Caco-2 (cell line): ENCODE measurements at regions of chr11 and their contacts with region 1.

Region 1: GRCh38 chr11:128587452-128587851 is at the start of gene ETS1:
- DNase-seq: no peak
- H3K4me3 ChIP-seq: no peak within 1 kb of the TSS
- H3K4me3 Mint-ChIP-seq: no peak within 1 kb of the TSS
- H3K27ac Mint-ChIP-seq: no peak within 1 kb of the TSS
- H3K4me1 ChIP-seq: no peaks in the 10 kb centered on the region
- H3K4me1 Mint-ChIP-seq: no peaks in the 10 kb centered on the region
- H3K27me3 ChIP-seq: peaks cover 4% of the 10 kb centered on the region; the same call in 1 of the 2 replicates
- H3K27me3 Mint-ChIP-seq: peaks cover 57% of the 10 kb centered on the region
- CTCF ChIP-seq: no peak
- total RNA-seq, gene ETS1: 1.1 and 1.2 TPM in 2 replicates

Region 2: DNA sequence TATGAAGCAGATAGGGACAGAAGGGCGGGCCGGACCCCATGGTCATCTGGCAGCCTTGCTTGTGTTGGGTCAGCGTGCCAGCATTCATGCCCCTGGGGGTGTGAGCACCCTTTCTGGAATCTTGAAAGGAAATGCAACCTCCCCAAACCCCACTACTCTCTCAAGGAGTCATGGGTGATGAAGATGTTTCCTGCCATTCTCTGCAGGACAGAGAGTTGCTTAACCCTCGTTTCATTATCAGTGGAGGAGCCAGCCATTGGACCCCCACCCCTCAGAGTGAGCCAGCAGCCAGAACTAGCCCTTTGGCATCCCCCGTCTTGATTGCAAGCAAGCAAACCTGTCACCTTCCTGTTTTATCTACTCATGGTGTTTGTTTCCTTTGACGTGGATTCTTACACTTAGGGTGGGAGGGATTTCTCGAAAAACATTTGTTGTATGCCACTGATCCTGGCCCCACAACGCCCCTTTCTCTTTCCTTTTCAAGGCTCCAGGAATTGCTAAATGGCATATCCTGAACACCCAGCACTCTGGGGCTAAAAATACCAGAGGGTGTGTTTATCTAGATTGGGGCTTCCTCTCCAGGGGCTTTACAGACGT is 258.4 kb before region 1 on chr11:
- CTCF ChIA-PET with region 1: no interaction called
- POLR2A ChIA-PET with region 1: no interaction called
- intact Hi-C with region 1: no loop called
- DNase-seq: no peak
- H3K4me3 ChIP-seq: no peak overlapping the region
- H3K4me3 Mint-ChIP-seq: no peak overlapping the region
- H3K27ac Mint-ChIP-seq: no peak overlapping the region
- H3K4me1 ChIP-seq: no peaks in the 10 kb centered on the region
- H3K4me1 Mint-ChIP-seq: no peaks in the 10 kb centered on the region
- H3K27me3 ChIP-seq: no peaks in the 10 kb centered on the region
- H3K27me3 Mint-ChIP-seq: peaks cover 20% of the 10 kb centered on the region
- CTCF ChIP-seq: no peak

Region 3: GRCh38 chr11:128814856-128815705 is 227.6 kb after region 1 on chr11:
- CTCF ChIA-PET with region 1: no interaction called
- POLR2A ChIA-PET with region 1: no interaction called
- intact Hi-C with region 1: loop called (anchors 1 kb)
- DNase-seq: peak; percentile 86 to 89
- H3K4me3 ChIP-seq: no peak overlapping the region
- H3K4me3 Mint-ChIP-seq: peak overlapping the region; percentile 16
- H3K27ac Mint-ChIP-seq: no peak overlapping the region
- H3K4me1 ChIP-seq: no peaks in the 10 kb centered on the region
- H3K4me1 Mint-ChIP-seq: peaks cover 7% of the 10 kb centered on the region
- H3K27me3 ChIP-seq: no peaks in the 10 kb centered on the region
- H3K27me3 Mint-ChIP-seq: peaks cover 16% of the 10 kb centered on the region
- CTCF ChIP-seq: no peak

Region 4: DNA sequence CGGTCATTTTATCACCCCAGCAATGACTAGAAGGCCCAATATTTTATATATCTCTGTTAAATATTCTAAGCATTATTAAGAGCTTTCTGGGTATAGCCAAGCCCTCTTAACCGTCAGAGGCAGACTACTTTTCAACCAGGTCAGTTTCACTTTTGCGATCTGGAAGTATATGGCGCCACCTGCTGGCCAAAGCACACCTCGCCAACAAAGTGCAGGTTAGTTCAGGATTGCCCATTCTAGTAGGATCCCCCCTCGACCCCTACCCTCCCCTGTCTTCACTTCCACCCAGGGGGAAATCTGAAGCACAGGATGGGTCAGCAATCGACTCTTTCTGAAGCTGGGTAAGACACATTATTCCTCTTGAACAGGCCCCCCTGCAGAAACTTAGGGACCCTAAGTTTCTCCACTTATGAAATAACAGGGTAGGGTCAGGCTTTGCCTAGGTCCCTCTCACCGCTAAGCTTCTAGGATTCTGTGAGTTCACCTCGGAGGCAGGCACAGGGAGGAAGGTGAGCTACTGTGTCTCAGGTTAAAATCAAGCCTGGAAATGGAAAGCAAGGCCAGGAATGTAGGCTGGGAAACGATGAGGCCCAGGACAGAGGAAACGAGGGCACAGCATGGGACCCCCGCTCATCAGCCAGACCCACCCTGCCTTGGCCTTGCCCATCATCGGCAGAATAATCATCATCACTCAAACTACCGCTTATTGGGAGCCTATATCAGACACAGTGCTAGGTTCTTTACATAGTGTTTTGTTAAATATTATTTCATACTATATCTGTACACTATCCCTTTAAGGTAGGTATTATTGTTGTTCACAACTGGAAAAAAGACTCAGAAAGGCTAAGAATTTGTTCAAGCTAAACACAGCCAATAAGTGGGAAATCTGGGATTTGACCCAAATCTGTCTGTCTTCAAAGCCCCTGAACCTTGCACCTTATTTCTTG is 244.0 kb after region 1 on chr11:
- CTCF ChIA-PET with region 1: no interaction called
- POLR2A ChIA-PET with region 1: no interaction called
- intact Hi-C with region 1: no loop called
- DNase-seq: peak; percentile 82 to 88
- H3K4me3 ChIP-seq: no peak overlapping the region
- H3K4me3 Mint-ChIP-seq: no peak overlapping the region
- H3K27ac Mint-ChIP-seq: no peak overlapping the region
- H3K4me1 ChIP-seq: peaks cover 12% of the 10 kb centered on the region
- H3K4me1 Mint-ChIP-seq: peaks cover 8% of the 10 kb centered on the region
- H3K27me3 ChIP-seq: no peaks in the 10 kb centered on the region
- H3K27me3 Mint-ChIP-seq: peaks cover 8% of the 10 kb centered on the region
- CTCF ChIP-seq: peak; percentile 97 to 98

Region 5: DNA sequence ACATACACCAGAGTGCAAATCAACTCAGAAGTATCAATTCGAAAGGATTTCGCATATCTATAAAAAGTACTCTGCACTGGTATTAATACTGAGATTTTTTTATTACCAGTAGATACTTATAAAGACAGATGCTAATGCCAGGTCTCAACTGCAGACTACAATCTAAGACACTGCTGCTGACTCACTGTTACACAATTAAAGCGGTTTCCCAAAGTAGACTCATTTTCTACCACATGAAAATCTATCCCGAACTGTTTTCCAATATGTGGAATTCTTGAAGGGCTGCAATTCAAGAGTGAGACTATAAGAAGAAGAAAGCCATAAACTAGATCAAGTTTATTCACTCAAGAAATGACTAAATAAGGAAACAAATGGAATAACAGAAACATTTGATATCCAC is 661.9 kb after region 1 on chr11:
- CTCF ChIA-PET with region 1: no interaction called
- POLR2A ChIA-PET with region 1: no interaction called
- intact Hi-C with region 1: no loop called
- DNase-seq: no peak
- H3K4me3 ChIP-seq: no peak overlapping the region
- H3K4me3 Mint-ChIP-seq: no peak overlapping the region
- H3K27ac Mint-ChIP-seq: no peak overlapping the region
- H3K4me1 ChIP-seq: peaks cover 14% of the 10 kb centered on the region
- H3K4me1 Mint-ChIP-seq: peaks cover 23% of the 10 kb centered on the region
- H3K27me3 ChIP-seq: no peaks in the 10 kb centered on the region
- H3K27me3 Mint-ChIP-seq: no peaks in the 10 kb centered on the region
- CTCF ChIP-seq: no peak